Activated CD4-positive, alpha-beta T cell treated with anti-CD3 and anti-CD28 coated beads for 36 hours (primary cell): ENCODE measurements at regions of chr9 and their contacts with region 1.

Region 1: GRCh38 chr9:110152704-110153374 is 55.1 kb downstream of the C9orf152 start:
- DNase-seq: no peak
- ATAC-seq: no peak
- H3K4me3 Mint-ChIP-seq: no peak overlapping the region
- H3K27ac Mint-ChIP-seq: no peak overlapping the region
- H3K4me1 Mint-ChIP-seq: peaks cover 68% of the 10 kb centered on the region
- H3K27me3 Mint-ChIP-seq: no peaks in the 10 kb centered on the region

Region 2: DNA sequence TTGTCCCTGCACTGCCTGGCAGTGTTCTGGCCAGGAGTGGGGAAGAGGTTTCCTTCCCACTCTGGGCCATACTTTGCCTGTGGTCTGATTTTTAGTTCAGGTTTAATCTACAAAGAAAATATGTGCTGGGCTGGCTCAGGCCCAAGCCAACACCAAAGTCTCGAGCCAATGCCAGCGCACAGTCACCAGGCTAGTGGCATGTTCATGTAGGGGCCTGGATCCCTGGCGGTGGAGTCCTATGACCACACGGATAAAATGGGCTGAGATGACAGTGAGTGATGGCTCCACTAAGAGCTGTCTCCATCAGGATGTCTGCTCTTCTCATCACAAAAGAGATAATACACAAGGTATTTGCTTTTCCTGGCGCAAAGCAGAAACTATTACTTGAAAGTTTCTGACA is 561.9 kb before region 1 on chr9:
- CTCF ChIA-PET with region 1: no interaction called
- POLR2A ChIA-PET with region 1: no interaction called
- intact Hi-C with region 1: no loop called
- DNase-seq: no peak
- ATAC-seq: no peak
- H3K4me3 Mint-ChIP-seq: no peak overlapping the region
- H3K27ac Mint-ChIP-seq: no peak overlapping the region
- H3K4me1 Mint-ChIP-seq: no peaks in the 10 kb centered on the region
- H3K27me3 Mint-ChIP-seq: peaks cover 10% of the 10 kb centered on the region

Region 3: GRCh38 chr9:109817846-109818472 is 334.9 kb before region 1 on chr9:
- CTCF ChIA-PET with region 1: interaction called, 4 read pairs
- POLR2A ChIA-PET with region 1: no interaction called
- intact Hi-C with region 1: loop called in 1 of 2 experiments (anchors 1 kb)
- DNase-seq: peak; percentile 67
- ATAC-seq: peak; percentile 71
- H3K4me3 Mint-ChIP-seq: no peak overlapping the region
- H3K27ac Mint-ChIP-seq: no peak overlapping the region
- H3K4me1 Mint-ChIP-seq: no peaks in the 10 kb centered on the region
- H3K27me3 Mint-ChIP-seq: peaks cover 16% of the 10 kb centered on the region

Region 4: DNA sequence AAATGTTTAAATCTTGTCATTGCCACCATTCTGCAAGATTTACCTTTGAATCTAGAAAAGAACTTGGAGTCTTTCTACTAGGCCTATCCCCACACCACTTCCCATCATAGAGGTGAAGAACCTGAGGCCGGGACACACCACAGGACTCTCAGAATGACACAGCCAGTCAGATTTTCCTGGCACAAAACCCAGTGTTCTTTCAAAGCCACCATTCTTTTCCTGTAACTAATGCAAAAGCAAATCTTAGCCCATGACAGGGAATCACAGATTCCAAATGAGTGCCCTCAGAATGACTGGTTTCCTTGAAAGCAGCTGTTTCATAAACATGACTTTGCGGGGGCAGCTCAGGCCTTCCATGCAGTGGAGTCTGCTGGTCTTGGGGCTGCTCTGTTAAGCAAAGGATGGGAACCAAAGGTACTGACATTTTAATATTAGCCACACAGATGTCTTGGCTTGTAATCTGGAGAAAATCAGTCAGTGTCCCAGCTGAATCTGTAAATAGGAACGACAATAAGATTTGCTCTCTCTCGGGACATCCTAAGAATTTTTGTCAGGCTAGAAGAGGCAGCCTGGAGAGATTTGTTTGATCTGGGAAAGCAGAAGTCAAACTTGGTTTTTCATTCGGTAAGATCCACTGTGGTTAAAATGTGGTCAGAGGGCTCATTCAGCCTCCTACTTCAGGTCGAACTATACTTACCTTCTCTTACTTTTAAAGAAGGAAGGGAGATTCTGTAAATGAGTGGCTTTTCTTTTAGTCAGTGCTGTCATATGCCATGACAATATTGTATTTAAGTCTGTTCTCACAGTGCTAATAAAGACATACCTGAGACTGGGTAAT is 257.7 kb before region 1 on chr9:
- CTCF ChIA-PET with region 1: interaction called, 6 read pairs
- POLR2A ChIA-PET with region 1: interaction called, 7 read pairs
- intact Hi-C with region 1: loop called (anchors 1 to 2 kb)
- DNase-seq: peak; percentile 80
- ATAC-seq: peak; percentile 75
- H3K4me3 Mint-ChIP-seq: peak overlapping the region; percentile 36
- H3K27ac Mint-ChIP-seq: peak overlapping the region; percentile 87
- H3K4me1 Mint-ChIP-seq: peaks cover 30% of the 10 kb centered on the region
- H3K27me3 Mint-ChIP-seq: peaks cover 6% of the 10 kb centered on the region

Region 5: DNA sequence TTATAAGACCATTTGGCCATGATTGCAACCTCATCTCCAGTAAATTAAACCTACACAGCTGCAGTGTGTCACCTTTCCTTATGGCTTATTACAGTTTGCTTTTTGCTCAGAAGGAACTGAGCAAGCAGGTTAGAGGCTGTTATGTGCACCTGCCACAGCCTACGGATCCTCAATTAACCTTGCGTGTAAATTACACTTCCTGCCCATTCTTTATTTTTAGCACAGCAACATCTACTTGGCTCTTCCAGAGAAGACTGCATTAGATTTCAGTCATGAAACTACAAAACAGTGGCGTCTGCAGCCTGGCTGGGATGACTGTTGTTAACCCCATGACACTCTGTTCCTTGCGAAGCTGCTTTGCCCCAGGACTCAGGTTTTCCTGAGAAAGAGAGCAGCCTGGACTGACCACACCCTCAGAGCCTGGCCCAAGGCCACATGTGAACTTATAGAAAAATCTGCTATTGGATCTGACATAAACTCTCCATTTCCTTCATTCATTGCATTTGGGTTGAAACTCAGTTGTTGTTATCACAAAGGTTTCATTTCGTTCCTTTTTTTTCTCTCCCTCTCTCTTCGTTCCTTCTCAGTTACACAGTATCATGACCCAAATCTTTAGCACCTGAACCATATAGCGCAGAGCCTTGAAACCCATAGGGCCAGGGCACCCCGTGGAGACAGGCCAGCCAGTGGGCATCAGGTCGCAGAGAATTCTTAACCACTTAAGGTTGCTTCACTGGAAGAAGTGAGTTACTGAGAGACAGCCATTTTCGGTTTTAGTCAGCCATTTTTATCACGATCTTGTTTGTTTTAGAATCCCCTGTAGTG is 234.3 kb before region 1 on chr9:
- CTCF ChIA-PET with region 1: interaction called, 3 read pairs
- POLR2A ChIA-PET with region 1: interaction called, 4 read pairs
- intact Hi-C with region 1: loop called in 1 of 2 experiments (anchors 1 kb)
- DNase-seq: peak; percentile 65
- ATAC-seq: peak; percentile 87
- H3K4me3 Mint-ChIP-seq: peak overlapping the region; percentile 58
- H3K27ac Mint-ChIP-seq: peak overlapping the region; percentile 99
- H3K4me1 Mint-ChIP-seq: peaks cover 34% of the 10 kb centered on the region
- H3K27me3 Mint-ChIP-seq: no peaks in the 10 kb centered on the region

Region 6: DNA sequence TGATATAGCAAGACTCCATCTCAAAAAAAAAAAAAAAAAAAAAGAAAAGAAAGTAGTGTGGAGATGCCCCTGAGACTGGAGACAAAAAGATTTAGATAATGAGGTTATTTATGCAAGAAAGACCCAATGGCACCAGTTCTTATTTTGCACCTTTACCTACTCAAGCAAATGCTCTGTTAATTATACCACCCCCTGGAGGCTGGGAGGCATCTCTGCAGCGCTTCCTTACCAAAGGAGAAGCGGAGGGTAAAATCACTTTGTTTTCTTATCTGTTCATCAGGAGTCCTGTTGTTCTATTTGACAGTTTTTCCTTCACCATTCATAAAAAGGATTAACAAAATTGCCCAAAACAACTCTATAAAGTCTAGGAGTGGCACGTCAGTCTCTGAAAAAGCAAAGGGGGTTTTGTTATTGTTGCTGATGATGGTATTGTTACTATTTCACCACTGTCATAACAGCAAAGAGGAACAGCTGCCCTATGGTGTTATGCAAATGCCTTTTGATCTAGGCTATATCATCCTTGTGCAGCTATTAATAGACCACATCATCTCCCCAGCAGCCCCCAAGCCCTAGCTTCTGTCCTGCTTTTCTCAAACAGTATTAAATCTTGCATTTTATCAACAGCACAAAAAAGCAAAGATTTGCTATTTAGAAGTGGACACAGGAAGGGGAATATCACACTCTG is 198.9 kb before region 1 on chr9:
- CTCF ChIA-PET with region 1: interaction called, 3 read pairs
- POLR2A ChIA-PET with region 1: interaction called, 11 read pairs
- intact Hi-C with region 1: no loop called
- DNase-seq: no peak
- ATAC-seq: no peak
- H3K4me3 Mint-ChIP-seq: no peak overlapping the region
- H3K27ac Mint-ChIP-seq: no peak overlapping the region
- H3K4me1 Mint-ChIP-seq: peaks cover 44% of the 10 kb centered on the region
- H3K27me3 Mint-ChIP-seq: peaks cover 5% of the 10 kb centered on the region

Region 7: GRCh38 chr9:110048403-110048975 is 104.3 kb before region 1 on chr9:
- CTCF ChIA-PET with region 1: interaction called, 6 read pairs
- POLR2A ChIA-PET with region 1: no interaction called
- intact Hi-C with region 1: loop called (anchors 1 kb)
- DNase-seq: peak; percentile 93
- ATAC-seq: peak; percentile 89
- H3K4me3 Mint-ChIP-seq: peak overlapping the region; percentile 87
- H3K27ac Mint-ChIP-seq: peak overlapping the region; percentile 75
- H3K4me1 Mint-ChIP-seq: peaks cover 36% of the 10 kb centered on the region
- H3K27me3 Mint-ChIP-seq: peaks cover 10% of the 10 kb centered on the region

Region 8: DNA sequence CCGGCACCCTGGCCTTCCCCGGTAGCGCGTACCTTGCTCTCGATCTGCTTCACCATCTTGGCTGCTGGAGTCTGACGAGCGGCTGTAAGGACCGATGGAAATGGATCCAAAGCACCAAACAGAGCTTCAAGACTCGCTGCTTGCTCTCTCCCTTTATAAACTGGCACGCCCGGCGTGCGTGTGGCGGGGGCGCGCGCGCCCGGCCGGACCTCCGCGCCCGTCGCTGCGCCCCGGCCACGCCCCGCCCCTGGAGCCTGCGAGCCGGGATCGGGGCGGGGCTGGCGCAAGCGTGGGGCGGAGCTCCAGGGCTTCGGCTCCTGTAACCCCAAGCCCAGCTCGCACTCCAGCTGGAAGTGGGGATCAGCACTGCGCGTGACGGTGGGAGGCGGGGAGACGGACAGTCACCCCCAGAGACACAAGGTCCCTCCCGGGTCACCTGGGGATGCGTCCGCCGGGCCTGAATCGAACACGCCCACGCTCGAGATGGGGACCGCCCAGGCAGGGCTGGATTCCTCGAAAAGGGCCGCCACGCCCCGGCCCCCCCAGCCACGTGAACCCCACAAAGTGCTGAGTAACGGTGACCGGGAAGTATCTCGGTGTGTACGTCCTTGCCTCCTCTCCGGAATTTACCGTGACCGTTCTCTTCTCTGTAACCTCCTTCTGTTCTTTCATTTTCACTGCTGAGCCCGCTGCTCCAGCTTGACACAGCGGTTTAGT is 103.7 kb after region 1 on chr9 and contains the start of gene TXN:
- CTCF ChIA-PET with region 1: interaction called, 4 read pairs
- POLR2A ChIA-PET with region 1: interaction called, 6 read pairs
- intact Hi-C with region 1: loop called in 1 of 2 experiments (anchors 1 kb)
- DNase-seq: peak; percentile 94
- ATAC-seq: peak; percentile 77
- H3K4me3 Mint-ChIP-seq: peak within 1 kb of the TSS; percentile 95
- H3K27ac Mint-ChIP-seq: peak within 1 kb of the TSS; percentile 99
- H3K4me1 Mint-ChIP-seq: peaks cover 60% of the 10 kb centered on the region
- H3K27me3 Mint-ChIP-seq: no peaks in the 10 kb centered on the region
- total RNA-seq, gene TXN: 449 to 553 TPM